Endothelial cell of umbilical vein (primary cell): ENCODE measurements at regions of chr19 and their contacts with region 1.

Region 1: DNA sequence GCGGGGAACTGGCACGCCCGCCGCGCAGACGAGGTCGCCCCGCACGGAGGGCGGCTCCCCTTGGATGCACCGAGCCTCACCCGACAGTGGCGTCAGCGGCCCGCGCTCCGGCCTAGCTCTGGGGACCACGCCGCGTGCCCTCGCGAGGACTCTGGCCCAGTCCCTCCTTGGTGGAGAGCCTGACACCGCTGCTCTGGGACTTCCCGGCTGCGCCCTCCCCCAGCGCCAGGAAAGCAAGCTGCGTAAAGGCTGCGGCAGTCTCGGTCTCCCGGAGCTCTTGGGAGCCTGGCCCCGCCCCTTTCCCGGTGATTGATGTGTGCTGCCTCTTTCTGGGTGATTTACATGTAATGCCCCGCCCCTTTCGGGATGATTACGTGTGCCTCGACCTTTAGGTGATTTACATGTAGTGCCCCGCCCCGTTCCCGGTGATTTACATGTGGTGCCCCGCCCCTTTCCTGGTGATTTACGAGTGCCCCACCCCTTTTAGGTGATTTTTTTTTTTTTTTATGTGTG is at the start of gene LENG9:
- DNase-seq: peak; percentile 98
- H3K4me3 ChIP-seq: peak within 1 kb of the TSS; percentile 28 to 46 (median 38)
- H3K27ac ChIP-seq: peak within 1 kb of the TSS; percentile 85
- H3K4me1 ChIP-seq: peaks cover 29% of the 10 kb centered on the region
- H3K27me3 ChIP-seq: no peaks in the 10 kb centered on the region
- CTCF ChIP-seq: no peak
- POLR2A ChIP-seq: peak; percentile 95
- total RNA-seq, gene LENG9: 2.8 and 3.2 TPM in 2 replicates

Region 2: GRCh38 chr19:53927739-53928138 is 535.8 kb before region 1 on chr19:
- CTCF ChIA-PET with region 1: no interaction called
- POLR2A ChIA-PET with region 1: no interaction called
- dilution Hi-C with region 1: no loop called
- intact Hi-C with region 1: no loop called
- DNase-seq: peak; percentile 51
- H3K4me3 ChIP-seq: no peak overlapping the region
- H3K27ac ChIP-seq: no peak overlapping the region
- H3K4me1 ChIP-seq: no peaks in the 10 kb centered on the region
- H3K27me3 ChIP-seq: no peaks in the 10 kb centered on the region
- CTCF ChIP-seq: no peak
- POLR2A ChIP-seq: no peak

Region 3: DNA sequence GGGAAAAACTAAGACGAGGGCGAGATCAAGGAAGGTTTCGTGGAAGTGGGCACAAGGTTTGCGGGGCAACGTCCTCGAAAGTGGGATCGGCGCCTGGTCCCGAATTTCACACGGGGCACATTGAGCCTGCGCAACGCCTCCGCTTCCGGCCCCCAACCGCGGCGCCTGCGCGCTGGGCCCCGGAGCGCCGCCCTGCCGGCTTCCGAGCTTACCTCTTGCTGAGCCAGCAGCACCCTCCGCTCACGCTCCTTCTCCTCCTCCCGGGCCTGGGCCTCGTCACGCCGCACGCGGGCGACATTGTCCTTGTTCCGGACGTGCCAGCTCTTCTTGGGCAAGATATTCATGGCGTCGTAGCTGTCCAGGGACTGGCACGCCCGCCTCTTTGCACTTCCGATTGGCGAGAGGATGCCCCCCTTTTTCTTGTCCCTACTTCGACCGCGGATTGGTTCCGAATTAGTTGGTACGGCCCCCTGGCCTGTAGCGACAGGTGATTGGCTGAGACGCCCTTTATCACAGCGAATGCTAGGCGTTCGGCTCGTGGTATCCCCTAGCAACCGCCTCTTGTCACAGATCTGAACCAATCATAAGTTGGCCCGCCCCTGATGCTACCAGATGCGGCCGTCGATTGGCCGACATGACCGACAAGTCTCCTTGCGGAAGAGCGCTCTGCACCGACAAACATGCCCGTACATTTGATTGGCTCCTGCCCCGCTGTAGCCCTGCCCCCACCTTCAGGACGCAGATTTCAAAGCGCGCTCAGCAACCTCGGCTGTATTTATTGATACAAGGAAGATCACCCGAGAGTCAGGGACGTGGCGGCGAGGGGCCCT is 304.0 kb before region 1 on chr19 and contains the start of gene LENG1:
- CTCF ChIA-PET with region 1: no interaction called
- POLR2A ChIA-PET with region 1: no interaction called
- dilution Hi-C with region 1: no loop called
- intact Hi-C with region 1: loop called (anchors 5 kb)
- DNase-seq: peak; percentile 100
- H3K4me3 ChIP-seq: peak within 1 kb of the TSS; percentile 56 to 80 (median 77)
- H3K27ac ChIP-seq: peak within 1 kb of the TSS; percentile 71
- H3K4me1 ChIP-seq: peaks cover 18% of the 10 kb centered on the region
- H3K27me3 ChIP-seq: peaks cover 0 to 8% of the 10 kb centered on the region in 2 experiments
- CTCF ChIP-seq: peak; percentile 24 to 29
- POLR2A ChIP-seq: peak; percentile 83
- total RNA-seq, gene LENG1: 5.0 and 6.9 TPM in 2 replicates

Region 4: DNA sequence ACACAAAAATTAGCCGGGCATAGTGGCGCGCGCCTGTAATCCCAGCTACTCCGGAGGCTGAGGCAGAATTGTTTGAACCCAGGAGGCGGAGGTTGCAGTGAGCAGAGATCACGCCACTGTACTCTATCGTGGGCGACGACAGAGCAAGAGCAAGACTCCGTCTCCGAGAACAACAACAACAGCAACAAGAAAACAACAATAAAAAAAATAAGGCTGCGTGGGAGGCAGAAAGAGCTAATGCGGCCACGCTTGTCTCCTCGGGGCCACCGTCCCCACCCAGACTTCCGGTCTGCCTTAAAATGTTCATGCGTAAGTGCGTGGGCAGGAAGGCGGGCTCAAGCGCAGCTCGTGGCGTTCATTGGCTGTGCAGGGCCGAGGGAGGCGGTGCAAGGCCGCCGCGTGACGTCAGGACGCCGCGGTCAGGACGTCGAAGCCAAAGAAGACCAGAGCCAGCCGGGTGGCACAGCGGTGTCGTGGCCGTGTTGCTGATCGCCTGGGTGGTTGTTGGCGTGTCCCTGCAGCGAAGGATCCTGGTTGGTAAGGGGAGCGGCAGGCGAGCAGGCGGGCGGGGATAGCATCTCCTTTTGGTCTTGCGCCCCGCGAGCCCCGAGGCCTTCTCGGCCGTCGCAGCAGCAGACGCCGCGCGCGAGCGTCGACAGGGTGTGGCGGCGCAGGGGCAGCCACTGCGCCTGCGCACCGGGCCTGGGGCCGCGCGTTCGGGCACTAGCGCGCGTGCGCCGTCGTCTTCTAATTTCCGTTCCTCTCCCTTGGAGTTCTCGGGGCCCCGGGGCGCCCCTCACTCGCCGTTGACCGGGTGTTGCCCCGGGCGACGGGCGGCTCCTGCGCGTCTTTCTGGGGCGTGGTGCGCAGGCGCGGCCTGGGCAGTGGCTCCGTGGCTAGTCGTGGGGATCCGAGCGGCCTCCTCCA is 14.6 kb before region 1 on chr19 and contains the start of gene LENG8:
- CTCF ChIA-PET with region 1: interaction called, 14 read pairs
- POLR2A ChIA-PET with region 1: interaction called, 11 read pairs
- dilution Hi-C with region 1: no loop called
- intact Hi-C with region 1: loop called (anchors 1 kb)
- DNase-seq: peak; percentile 99
- H3K4me3 ChIP-seq: peak within 1 kb of the TSS; percentile 76 to 96 (median 92)
- H3K27ac ChIP-seq: peak within 1 kb of the TSS; percentile 87
- H3K4me1 ChIP-seq: peaks cover 22% of the 10 kb centered on the region
- H3K27me3 ChIP-seq: no peaks in the 10 kb centered on the region
- CTCF ChIP-seq: no peak
- POLR2A ChIP-seq: peak; percentile 97
- total RNA-seq, gene LENG8: 213 and 218 TPM in 2 replicates

Region 5: DNA sequence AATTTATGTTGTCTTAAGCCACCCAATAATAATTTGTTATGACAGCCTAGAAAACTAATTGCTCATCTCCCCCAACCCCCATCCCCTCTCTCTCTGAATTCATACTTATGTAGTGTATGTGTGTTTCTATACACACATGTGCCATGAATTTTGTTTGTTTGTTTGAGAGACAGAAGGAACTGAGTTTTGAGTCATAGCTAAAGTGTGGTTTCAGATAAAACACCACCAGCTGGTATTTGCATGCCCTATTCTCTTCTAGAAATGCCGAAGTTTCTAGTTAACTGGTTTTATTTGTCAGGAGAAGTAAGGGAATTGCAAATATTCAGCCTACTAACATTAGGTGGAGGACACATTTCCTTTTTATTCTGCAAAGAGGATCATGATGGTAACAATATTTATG is 92.6 kb after region 1 on chr19:
- CTCF ChIA-PET with region 1: no interaction called
- POLR2A ChIA-PET with region 1: no interaction called
- dilution Hi-C with region 1: no loop called
- intact Hi-C with region 1: no loop called
- DNase-seq: no peak
- H3K4me3 ChIP-seq: no peak overlapping the region
- H3K27ac ChIP-seq: no peak overlapping the region
- H3K4me1 ChIP-seq: no peaks in the 10 kb centered on the region
- H3K27me3 ChIP-seq: no peaks in the 10 kb centered on the region
- CTCF ChIP-seq: no peak
- POLR2A ChIP-seq: no peak

Region 6: GRCh38 chr19:55080968-55081772 is 617.6 kb after region 1 on chr19:
- CTCF ChIA-PET with region 1: no interaction called
- POLR2A ChIA-PET with region 1: no interaction called
- dilution Hi-C with region 1: no loop called
- intact Hi-C with region 1: loop called (anchors 5 kb)
- DNase-seq: peak; percentile 89
- H3K4me3 ChIP-seq: peak overlapping the region; percentile 55 to 67 (median 58)
- H3K27ac ChIP-seq: no peak overlapping the region
- H3K4me1 ChIP-seq: peaks cover 20% of the 10 kb centered on the region
- H3K27me3 ChIP-seq: peaks cover 0 to 3% of the 10 kb centered on the region in 2 experiments
- CTCF ChIP-seq: no peak
- POLR2A ChIP-seq: no peak

Region 7: GRCh38 chr19:55653758-55654539 is 1190.4 kb after region 1 on chr19:
- CTCF ChIA-PET with region 1: no interaction called
- POLR2A ChIA-PET with region 1: no interaction called
- dilution Hi-C with region 1: no loop called
- intact Hi-C with region 1: loop called (anchors 10 kb)
- DNase-seq: peak; percentile 99
- H3K4me3 ChIP-seq: peak overlapping the region; percentile 86 to 98 (median 89)
- H3K27ac ChIP-seq: peak overlapping the region; percentile 99
- H3K4me1 ChIP-seq: peaks cover 25% of the 10 kb centered on the region
- H3K27me3 ChIP-seq: no peaks in the 10 kb centered on the region
- CTCF ChIP-seq: peak; percentile 100
- POLR2A ChIP-seq: peak; percentile 79